CD4-positive, alpha-beta T cell (primary cell): ENCODE measurements at regions of chr3 and their contacts with region 1.

Region 1: DNA sequence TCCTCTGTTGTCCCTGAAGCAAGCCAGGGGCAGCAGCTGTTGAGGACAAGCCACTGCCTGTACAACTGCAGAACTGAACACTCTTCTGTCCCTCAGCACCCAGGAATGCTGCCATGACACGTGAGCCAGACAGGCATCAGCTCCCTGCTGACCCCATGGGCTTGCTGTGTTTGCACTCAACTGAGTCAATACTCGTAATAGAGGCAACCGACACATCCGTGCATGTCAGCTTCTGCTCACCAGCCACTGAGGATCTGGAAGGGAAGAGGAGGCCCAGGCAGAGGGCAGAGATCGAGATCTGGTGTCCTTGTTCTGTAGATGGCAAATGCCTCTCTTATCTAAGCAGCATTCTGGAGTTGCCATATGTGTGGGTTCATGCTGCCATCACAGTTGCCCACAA is 54.3 kb upstream of the SEC61A1 start:
- DNase-seq: no peak
- ATAC-seq: no peak
- H3K4me3 ChIP-seq: no peak overlapping the region
- H3K4me3 Mint-ChIP-seq: no peak overlapping the region
- H3K27ac ChIP-seq: no peak overlapping the region
- H3K27ac Mint-ChIP-seq: no peak overlapping the region
- H3K4me1 ChIP-seq: no peaks in the 10 kb centered on the region
- H3K4me1 Mint-ChIP-seq: no peaks in the 10 kb centered on the region
- H3K27me3 ChIP-seq: no peaks in the 10 kb centered on the region
- H3K27me3 Mint-ChIP-seq: peaks cover 6% of the 10 kb centered on the region
- CTCF ChIP-seq: no peak

Region 2: DNA sequence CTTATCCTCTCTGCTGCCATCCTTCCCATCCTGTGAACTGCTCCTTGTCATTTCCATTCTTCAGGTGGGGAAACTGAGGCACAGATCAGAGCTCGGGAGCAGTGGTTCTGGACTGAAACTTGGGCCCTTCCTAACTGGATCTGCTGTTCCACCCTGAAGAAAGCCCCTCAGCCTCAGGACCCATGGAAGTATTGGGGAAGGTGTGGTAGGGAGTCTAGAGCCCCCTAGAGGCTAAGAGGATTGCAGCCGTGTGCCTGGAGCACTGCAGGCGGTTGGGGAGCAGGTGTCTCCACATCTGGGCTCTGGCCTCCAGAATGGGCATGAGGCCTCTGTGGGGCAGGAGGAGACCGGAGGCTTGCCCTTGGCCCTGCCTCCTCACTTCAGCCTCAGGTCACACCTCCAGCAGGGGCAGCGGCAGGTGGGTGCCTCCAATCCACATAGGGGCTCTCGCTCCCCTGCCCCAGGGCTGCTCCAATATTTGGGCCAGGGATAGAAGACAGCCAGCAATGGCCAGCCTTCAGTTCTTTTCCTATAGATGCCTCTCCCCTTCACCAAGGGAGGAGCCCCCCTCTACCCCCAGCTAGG is 440.6 kb after region 1 on chr3:
- CTCF ChIA-PET with region 1: no interaction called
- POLR2A ChIA-PET with region 1: no interaction called
- intact Hi-C with region 1: no loop called
- DNase-seq: no peak
- ATAC-seq: no peak
- H3K4me3 ChIP-seq: no peak overlapping the region
- H3K4me3 Mint-ChIP-seq: no peak overlapping the region
- H3K27ac ChIP-seq: no peak overlapping the region
- H3K27ac Mint-ChIP-seq: no peak overlapping the region
- H3K4me1 ChIP-seq: no peaks in the 10 kb centered on the region
- H3K4me1 Mint-ChIP-seq: no peaks in the 10 kb centered on the region
- H3K27me3 ChIP-seq: peaks cover 11 to 14% of the 10 kb centered on the region in 2 experiments
- H3K27me3 Mint-ChIP-seq: peaks cover 44% of the 10 kb centered on the region
- CTCF ChIP-seq: no peak

Region 3: GRCh38 chr3:128935927-128936326 is 938.0 kb after region 1 on chr3:
- CTCF ChIA-PET with region 1: no interaction called
- POLR2A ChIA-PET with region 1: no interaction called
- intact Hi-C with region 1: loop called in 1 of 2 experiments (anchors 5 kb)
- DNase-seq: no peak
- ATAC-seq: no peak
- H3K4me3 ChIP-seq: no peak overlapping the region
- H3K4me3 Mint-ChIP-seq: no peak overlapping the region
- H3K27ac ChIP-seq: no peak overlapping the region
- H3K27ac Mint-ChIP-seq: no peak overlapping the region
- H3K4me1 ChIP-seq: no peaks in the 10 kb centered on the region
- H3K4me1 Mint-ChIP-seq: no peaks in the 10 kb centered on the region
- H3K27me3 ChIP-seq: peaks cover 0 to 6% of the 10 kb centered on the region in 2 experiments
- H3K27me3 Mint-ChIP-seq: no peaks in the 10 kb centered on the region
- CTCF ChIP-seq: no peak